CD4-positive, alpha-beta T cell (primary cell): ENCODE measurements at regions of chr3 and their contacts with region 1.

Region 1: GRCh38 chr3:138068579-138069174 is 46.7 kb downstream of the DZIP1L start:
- DNase-seq: peak; percentile 53 to 82 (median 64)
- ATAC-seq: peak; percentile 77
- H3K4me3 ChIP-seq: no peak overlapping the region
- H3K4me3 Mint-ChIP-seq: no peak overlapping the region
- H3K27ac ChIP-seq: no peak overlapping the region
- H3K27ac Mint-ChIP-seq: no peak overlapping the region
- H3K4me1 ChIP-seq: no peaks in the 10 kb centered on the region
- H3K4me1 Mint-ChIP-seq: no peaks in the 10 kb centered on the region
- H3K27me3 ChIP-seq: no peaks in the 10 kb centered on the region
- H3K27me3 Mint-ChIP-seq: peaks cover 12% of the 10 kb centered on the region
- CTCF ChIP-seq: peak; percentile 79

Region 2: DNA sequence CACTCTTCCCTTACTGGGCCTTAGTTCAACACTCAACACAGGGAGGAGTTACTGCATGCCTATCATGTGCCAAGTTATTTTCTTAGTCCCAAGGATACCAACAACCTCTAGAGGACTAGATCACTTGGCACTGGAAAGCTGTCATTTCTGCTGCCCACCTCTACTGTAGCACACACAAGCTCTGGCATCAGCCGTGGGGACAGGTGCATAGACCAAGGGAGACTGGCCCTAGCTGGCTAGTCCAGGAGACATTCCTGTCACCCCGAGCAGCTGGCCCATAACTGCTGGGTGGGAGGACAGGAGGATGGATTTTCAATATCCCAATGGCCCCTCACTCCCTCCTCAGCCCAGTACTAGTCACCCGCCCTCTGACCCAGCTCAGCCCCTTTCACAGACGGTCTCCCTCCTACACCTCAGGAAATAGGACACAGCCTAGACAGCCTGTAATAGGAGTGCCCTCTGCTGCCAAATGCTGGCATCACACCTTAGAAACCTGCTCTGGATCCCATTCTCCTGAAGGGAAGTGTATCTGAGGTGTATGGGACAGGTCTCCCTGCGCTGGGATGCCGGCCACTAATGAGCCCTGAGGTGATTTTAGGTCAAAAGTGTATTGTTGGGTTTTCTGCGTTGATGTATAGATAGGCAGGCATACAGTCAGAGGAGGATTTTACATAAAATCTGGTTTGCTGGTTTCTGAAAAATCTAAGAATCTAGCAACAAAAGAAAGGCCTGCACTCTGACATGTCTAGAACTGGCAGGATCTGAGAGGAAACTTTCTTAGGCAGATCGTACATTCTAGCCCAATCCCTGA is 50.1 kb after region 1 on chr3:
- CTCF ChIA-PET with region 1: no interaction called
- POLR2A ChIA-PET with region 1: no interaction called
- intact Hi-C with region 1: loop called (anchors 1 kb)
- DNase-seq: peak; percentile 12 to 60 (median 36)
- ATAC-seq: no peak
- H3K4me3 ChIP-seq: no peak overlapping the region
- H3K4me3 Mint-ChIP-seq: no peak overlapping the region
- H3K27ac ChIP-seq: no peak overlapping the region
- H3K27ac Mint-ChIP-seq: no peak overlapping the region
- H3K4me1 ChIP-seq: peaks cover 12% of the 10 kb centered on the region
- H3K4me1 Mint-ChIP-seq: peaks cover 9% of the 10 kb centered on the region
- H3K27me3 ChIP-seq: peaks cover 16 to 26% of the 10 kb centered on the region in 2 experiments
- H3K27me3 Mint-ChIP-seq: peaks cover 60% of the 10 kb centered on the region
- CTCF ChIP-seq: peak; percentile 74

Region 3: GRCh38 chr3:138928727-138929385 is 860.2 kb after region 1 on chr3:
- CTCF ChIA-PET with region 1: no interaction called
- POLR2A ChIA-PET with region 1: no interaction called
- intact Hi-C with region 1: loop called in 1 of 2 experiments (anchors 5 kb)
- DNase-seq: no peak
- ATAC-seq: no peak
- H3K4me3 ChIP-seq: no peak overlapping the region
- H3K4me3 Mint-ChIP-seq: no peak overlapping the region
- H3K27ac ChIP-seq: no peak overlapping the region
- H3K27ac Mint-ChIP-seq: no peak overlapping the region
- H3K4me1 ChIP-seq: no peaks in the 10 kb centered on the region
- H3K4me1 Mint-ChIP-seq: no peaks in the 10 kb centered on the region
- H3K27me3 ChIP-seq: peaks cover 10 to 12% of the 10 kb centered on the region in 2 experiments
- H3K27me3 Mint-ChIP-seq: peaks cover 42% of the 10 kb centered on the region
- CTCF ChIP-seq: no peak